H1 (cell line): ENCODE measurements at regions of chr13 and their contacts with region 1.

Region 1: GRCh38 chr13:30978981-30979956 is 46.8 kb downstream of the TEX26 start:
- DNase-seq: peak; percentile 85 to 92
- H3K4me3 ChIP-seq: no peak overlapping the region
- H3K27ac ChIP-seq: no peak overlapping the region
- H3K4me1 ChIP-seq: peaks cover 0 to 3% (median 0%) of the 10 kb centered on the region in 4 experiments; a peak in 1 of 7 replicates
- H3K27me3 ChIP-seq: no peaks in the 10 kb centered on the region
- CTCF ChIP-seq: peak; percentile 89 to 97 (median 95)
- EP300 ChIP-seq: no peak
- POLR2A ChIP-seq: no peak
- RAD21 ChIP-seq: peak; percentile 79 to 92

Region 2: DNA sequence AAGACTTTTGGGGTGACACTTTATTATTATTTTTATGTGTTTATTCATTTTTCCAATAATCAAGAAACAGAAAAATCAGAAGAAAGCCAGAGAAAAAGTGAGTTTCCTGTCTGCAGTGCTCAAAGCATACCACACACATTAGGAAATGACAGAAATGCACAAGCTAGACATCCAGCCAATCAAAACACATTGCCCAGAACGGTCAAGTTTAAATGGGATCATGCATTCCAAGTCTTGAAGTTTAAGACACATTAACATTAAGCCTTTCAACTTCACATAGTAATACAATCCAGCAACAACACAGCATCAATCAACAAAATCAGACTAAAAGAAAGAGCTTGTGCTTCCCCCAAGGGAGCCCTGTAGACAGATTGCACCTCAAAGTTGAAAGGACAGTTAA is 101.9 kb before region 1 on chr13:
- CTCF ChIA-PET with region 1: no interaction called
- POLR2A ChIA-PET with region 1: no interaction called
- DNase-seq: no peak
- H3K4me3 ChIP-seq: no peak overlapping the region
- H3K27ac ChIP-seq: no peak overlapping the region
- H3K4me1 ChIP-seq: peaks cover 2 to 12% (median 3%) of the 10 kb centered on the region in 4 experiments; a peak in 5 of 7 replicates
- H3K27me3 ChIP-seq: no peaks in the 10 kb centered on the region
- CTCF ChIP-seq: no peak
- EP300 ChIP-seq: no peak
- POLR2A ChIP-seq: no peak
- RAD21 ChIP-seq: no peak

Region 3: DNA sequence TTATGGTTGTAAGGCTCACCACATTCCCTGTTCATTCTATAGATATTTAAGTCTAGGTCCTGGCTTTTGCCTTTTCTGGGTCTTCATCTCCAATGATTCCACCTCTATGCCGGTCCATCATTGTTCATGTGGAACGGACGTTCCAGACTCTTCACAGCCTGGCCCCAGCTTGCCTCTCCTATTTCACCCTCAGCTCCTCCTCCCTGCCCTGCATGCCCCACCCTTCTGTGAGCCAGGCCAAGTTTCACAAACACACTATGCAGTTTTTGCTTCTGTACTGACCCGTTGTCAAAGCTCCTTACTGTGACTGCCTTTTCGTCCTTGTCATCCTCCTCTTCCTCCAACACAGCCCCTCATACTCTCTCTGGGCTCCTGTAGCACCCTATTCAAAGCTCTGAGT is 15.5 kb before region 1 on chr13:
- CTCF ChIA-PET with region 1: interaction called, 19 read pairs
- POLR2A ChIA-PET with region 1: no interaction called
- DNase-seq: no peak
- H3K4me3 ChIP-seq: no peak overlapping the region
- H3K27ac ChIP-seq: no peak overlapping the region
- H3K4me1 ChIP-seq: no peaks in the 10 kb centered on the region
- H3K27me3 ChIP-seq: no peaks in the 10 kb centered on the region
- CTCF ChIP-seq: no peak
- EP300 ChIP-seq: no peak
- POLR2A ChIP-seq: no peak
- RAD21 ChIP-seq: no peak

Region 4: GRCh38 chr13:30968846-30969245 is 10.4 kb before region 1 on chr13:
- CTCF ChIA-PET with region 1: interaction called, 19 read pairs
- POLR2A ChIA-PET with region 1: no interaction called
- DNase-seq: no peak
- H3K4me3 ChIP-seq: no peak overlapping the region
- H3K27ac ChIP-seq: no peak overlapping the region
- H3K4me1 ChIP-seq: no peaks in the 10 kb centered on the region
- H3K27me3 ChIP-seq: no peaks in the 10 kb centered on the region
- CTCF ChIP-seq: no peak
- EP300 ChIP-seq: no peak
- POLR2A ChIP-seq: no peak
- RAD21 ChIP-seq: no peak

Region 5: DNA sequence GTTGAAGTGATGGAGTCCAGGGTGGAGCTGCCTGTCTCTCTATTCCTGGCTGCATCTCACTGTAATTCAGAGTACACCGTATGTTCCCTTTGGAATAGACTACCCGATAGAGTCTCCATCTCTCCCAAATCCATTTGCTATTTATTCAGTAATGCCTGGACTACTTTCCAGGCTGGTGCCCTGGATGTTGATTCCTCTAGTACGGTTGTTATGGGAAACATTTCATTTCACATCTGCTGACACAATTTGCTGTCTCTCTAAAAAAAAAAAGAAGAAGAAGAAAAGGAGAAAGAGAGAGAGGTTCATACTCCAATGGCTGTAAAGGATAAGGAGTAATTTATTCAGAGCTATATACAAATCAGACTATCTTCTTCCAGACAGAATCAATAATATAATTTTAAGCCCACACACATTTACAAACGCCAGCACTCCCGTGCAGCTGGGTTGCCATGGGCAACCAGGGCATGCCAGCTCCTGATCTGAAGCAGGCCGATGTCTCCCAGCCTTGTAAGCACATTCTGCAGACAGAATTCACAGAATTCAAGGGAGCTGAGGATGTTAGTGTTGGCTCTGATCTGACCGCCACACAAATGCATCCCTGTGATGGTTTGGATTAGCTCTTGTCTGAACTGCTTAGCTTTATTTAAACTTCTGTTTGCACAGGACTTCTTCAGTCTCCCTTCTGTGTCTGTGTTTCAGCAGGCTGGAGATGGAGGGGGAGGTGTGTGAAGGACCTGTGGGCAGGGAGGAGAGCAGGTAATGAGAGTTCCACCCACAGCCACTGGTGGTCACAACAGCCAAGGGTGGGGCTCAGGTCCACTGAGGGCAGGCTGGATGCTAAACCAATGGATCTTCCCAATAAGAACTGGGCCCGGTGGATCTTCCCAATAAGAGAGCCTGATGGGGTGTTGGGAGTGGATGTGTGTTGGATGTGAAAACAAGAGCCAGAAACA is 19.1 kb after region 1 on chr13:
- CTCF ChIA-PET with region 1: interaction called, 11 read pairs
- POLR2A ChIA-PET with region 1: no interaction called
- DNase-seq: no peak
- H3K4me3 ChIP-seq: no peak overlapping the region
- H3K27ac ChIP-seq: no peak overlapping the region
- H3K4me1 ChIP-seq: 0 out of 7 replicates have a peak, but pooled peaks cover 0 to 2% (median under 1%) of the 10 kb centered on the region in 4 experiments
- H3K27me3 ChIP-seq: no peaks in the 10 kb centered on the region
- CTCF ChIP-seq: no peak
- EP300 ChIP-seq: no peak
- POLR2A ChIP-seq: no peak
- RAD21 ChIP-seq: no peak

Region 6: GRCh38 chr13:31009166-31009565 is 29.9 kb after region 1 on chr13:
- CTCF ChIA-PET with region 1: interaction called, 21 read pairs
- POLR2A ChIA-PET with region 1: interaction called, 3 read pairs
- DNase-seq: no peak
- H3K4me3 ChIP-seq: no peak overlapping the region
- H3K27ac ChIP-seq: no peak overlapping the region
- H3K4me1 ChIP-seq: peaks cover 2 to 13% (median 9%) of the 10 kb centered on the region in 4 experiments; a peak in 5 of 7 replicates
- H3K27me3 ChIP-seq: no peaks in the 10 kb centered on the region
- CTCF ChIP-seq: no peak
- EP300 ChIP-seq: no peak
- POLR2A ChIP-seq: no peak
- RAD21 ChIP-seq: no peak

Region 7: DNA sequence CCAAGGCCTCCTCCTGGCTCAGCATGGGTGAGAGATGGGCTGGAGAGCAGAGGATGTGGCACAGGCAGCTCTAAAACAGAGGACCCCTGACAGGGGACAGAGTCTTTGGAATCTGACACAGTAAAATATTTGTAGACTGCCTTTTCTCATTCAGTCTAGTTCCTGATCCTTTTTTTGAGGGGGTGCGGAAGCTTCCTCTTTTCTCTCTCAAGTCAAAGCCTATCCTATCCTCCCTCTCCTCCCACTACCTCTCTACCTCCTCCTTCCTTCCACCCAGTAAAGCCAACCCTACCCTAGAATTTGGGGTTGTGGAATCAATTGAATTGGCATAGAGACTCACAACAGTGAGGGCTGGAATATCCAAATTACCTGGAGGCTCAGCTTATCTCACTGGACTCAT is 35.2 kb after region 1 on chr13:
- CTCF ChIA-PET with region 1: interaction called, 21 read pairs
- POLR2A ChIA-PET with region 1: interaction called, 3 read pairs
- DNase-seq: no peak
- H3K4me3 ChIP-seq: no peak overlapping the region
- H3K27ac ChIP-seq: no peak overlapping the region
- H3K4me1 ChIP-seq: peaks cover 2 to 13% (median 9%) of the 10 kb centered on the region in 4 experiments; a peak in 5 of 7 replicates
- H3K27me3 ChIP-seq: no peaks in the 10 kb centered on the region
- CTCF ChIP-seq: no peak
- EP300 ChIP-seq: no peak
- POLR2A ChIP-seq: no peak
- RAD21 ChIP-seq: no peak

Region 8: GRCh38 chr13:31057403-31058033 is 78.2 kb after region 1 on chr13:
- CTCF ChIA-PET with region 1: no interaction called
- POLR2A ChIA-PET with region 1: no interaction called
- DNase-seq: no peak
- H3K4me3 ChIP-seq: no peak overlapping the region
- H3K27ac ChIP-seq: no peak overlapping the region
- H3K4me1 ChIP-seq: no peaks in the 10 kb centered on the region; a peak in 1 of 7 replicates
- H3K27me3 ChIP-seq: no peaks in the 10 kb centered on the region
- CTCF ChIP-seq: no peak
- EP300 ChIP-seq: no peak
- POLR2A ChIP-seq: no peak
- RAD21 ChIP-seq: no peak